ENCODE measurements at regions of chr22 and their contacts with region 1.

Region 1: DNA sequence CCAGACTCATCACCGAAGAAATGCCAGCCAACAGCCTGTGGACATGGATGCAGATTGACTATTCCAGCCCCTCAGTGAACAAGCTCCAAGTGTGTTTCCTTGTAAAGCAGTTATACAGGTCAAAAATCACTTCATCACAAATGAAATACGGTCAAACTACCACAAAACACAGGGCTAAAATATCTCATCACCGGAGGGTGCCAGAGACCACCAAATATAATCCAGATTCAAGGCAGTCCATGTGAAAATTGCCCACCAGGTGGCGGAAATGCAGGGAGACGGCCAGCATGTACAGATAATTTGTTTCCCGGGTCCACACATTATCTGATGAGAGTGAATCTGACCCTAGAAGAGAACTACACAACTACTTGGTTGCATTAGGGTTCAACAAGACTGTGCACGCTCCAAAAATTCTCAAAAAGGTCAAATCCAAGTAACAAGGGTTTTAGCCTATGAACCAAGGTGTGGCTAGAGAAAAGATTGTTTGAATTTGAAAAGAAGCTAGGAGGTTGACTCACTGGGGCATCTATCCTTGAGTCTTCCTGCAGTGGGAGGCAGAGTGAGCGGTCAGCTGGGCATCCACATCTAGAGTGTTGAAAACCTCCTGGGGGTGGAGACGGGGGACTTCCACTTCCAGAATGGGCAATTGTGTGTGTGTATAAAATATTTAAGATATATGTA is 71.7 kb downstream of the IGLL5 start:
- DNase-seq: peak in 1 of 3 donors; percentile 46
- H3K4me3 ChIP-seq: no peak overlapping the region
- H3K4me3 Mint-ChIP-seq: no peak overlapping the region
- H3K27ac ChIP-seq: no peak overlapping the region
- H3K27ac Mint-ChIP-seq: no peak overlapping the region
- H3K4me1 ChIP-seq: peaks cover 13 to 15% of the 10 kb centered on the region in 2 donors
- H3K4me1 Mint-ChIP-seq: peaks cover 13% of the 10 kb centered on the region
- H3K27me3 ChIP-seq: peaks cover 0 to 1% of the 10 kb centered on the region in 2 donors
- H3K27me3 Mint-ChIP-seq: peaks cover 11 to 22% (median 20%) of the 10 kb centered on the region in 3 donors
- CTCF ChIP-seq: peak; percentile 70

Region 2: DNA sequence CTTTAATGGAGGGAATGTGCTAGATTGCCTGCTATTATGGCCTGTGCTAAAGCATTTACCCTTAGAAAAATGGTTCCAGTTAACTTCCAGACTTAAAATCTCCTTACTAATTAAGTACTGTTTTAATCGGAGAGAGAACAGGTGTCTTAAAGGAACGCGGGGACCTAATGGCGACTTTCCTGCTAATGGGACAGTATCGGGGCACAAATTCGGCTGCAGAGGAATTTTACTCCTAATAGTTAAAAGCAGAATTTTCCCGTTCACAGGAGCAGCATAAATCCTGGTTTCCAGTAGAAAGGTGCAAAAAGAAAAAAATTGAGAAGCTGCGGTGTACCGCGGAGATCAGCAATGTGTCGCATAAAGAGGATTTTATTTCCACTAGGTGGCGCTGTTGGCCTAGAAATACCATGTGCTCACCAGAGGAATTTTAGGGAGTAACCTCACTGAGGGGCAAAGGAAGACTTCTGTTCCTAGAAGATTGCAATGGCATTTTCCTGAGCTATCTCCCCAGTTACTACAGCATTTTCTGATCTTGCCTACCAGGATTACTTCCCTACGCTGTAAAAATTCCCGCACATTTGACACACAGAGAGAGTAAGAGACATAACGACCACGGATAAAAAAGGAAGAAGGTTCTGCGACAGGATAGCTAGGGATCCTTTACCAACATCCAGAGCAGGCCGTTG is 495.3 kb before region 1 on chr22:
- intact Hi-C with region 1: loop called in 1 of 2 experiments (anchors 10 kb)
- DNase-seq: peak; percentile 39 to 64 (median 54)
- H3K4me3 ChIP-seq: no peak overlapping the region
- H3K4me3 Mint-ChIP-seq: peak overlapping the region in 1 of 2 donors; percentile 35
- H3K27ac ChIP-seq: no peak overlapping the region
- H3K27ac Mint-ChIP-seq: peak overlapping the region in 1 of 7 donors; percentile 51
- H3K4me1 ChIP-seq: no peaks in the 10 kb centered on the region
- H3K4me1 Mint-ChIP-seq: peaks cover 2% of the 10 kb centered on the region
- H3K27me3 ChIP-seq: peaks cover 3 to 9% of the 10 kb centered on the region in 2 donors
- H3K27me3 Mint-ChIP-seq: peaks cover 3 to 35% (median 10%) of the 10 kb centered on the region in 3 donors
- CTCF ChIP-seq: peak; percentile 88

Region 3: DNA sequence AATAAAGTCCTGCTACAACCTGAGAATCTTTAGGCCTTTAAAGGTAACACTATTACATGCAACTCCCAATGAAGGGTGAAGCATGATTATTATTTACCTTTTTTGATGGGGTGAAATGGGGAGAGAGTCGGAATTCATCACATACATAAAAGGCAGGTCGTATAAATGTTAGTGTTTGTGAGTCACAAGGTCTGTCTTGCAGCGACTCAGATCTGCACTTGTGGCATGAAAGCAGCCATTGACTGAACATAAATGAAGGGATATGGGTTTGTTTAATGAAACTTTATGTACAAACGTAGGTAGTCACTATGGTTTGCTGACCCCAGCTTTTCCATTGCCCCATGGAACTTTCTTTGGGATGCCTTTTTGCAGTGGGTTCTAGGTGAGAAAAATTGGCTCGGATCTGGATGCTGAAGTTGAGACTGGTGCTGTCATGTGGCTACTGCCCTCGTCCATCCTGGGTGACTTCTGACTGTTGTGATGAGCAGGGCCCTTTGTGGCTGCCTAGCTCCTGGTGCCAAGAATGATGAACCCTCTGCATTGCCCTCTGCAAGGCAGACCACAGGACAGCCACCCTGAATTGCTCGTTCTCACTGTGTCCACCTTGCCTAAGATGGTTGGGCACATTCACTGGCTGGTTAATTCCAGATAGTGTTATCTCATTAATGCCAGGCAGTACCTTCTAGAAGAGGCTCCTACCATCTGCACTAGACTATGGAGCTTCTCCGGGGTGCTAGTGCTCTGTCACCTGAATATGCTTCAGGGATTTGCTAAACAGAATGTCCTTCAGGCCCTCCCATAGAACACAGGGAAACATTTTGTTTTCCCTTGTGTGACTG is 303.6 kb before region 1 on chr22:
- intact Hi-C with region 1: no loop called
- DNase-seq: no peak
- H3K4me3 ChIP-seq: no peak overlapping the region
- H3K4me3 Mint-ChIP-seq: no peak overlapping the region
- H3K27ac ChIP-seq: no peak overlapping the region
- H3K27ac Mint-ChIP-seq: no peak overlapping the region
- H3K4me1 ChIP-seq: no peaks in the 10 kb centered on the region
- H3K4me1 Mint-ChIP-seq: peaks cover 2% of the 10 kb centered on the region
- H3K27me3 ChIP-seq: no peaks in the 10 kb centered on the region
- H3K27me3 Mint-ChIP-seq: peaks cover 3 to 7% (median 7%) of the 10 kb centered on the region in 3 donors
- CTCF ChIP-seq: no peak

Region 4: DNA sequence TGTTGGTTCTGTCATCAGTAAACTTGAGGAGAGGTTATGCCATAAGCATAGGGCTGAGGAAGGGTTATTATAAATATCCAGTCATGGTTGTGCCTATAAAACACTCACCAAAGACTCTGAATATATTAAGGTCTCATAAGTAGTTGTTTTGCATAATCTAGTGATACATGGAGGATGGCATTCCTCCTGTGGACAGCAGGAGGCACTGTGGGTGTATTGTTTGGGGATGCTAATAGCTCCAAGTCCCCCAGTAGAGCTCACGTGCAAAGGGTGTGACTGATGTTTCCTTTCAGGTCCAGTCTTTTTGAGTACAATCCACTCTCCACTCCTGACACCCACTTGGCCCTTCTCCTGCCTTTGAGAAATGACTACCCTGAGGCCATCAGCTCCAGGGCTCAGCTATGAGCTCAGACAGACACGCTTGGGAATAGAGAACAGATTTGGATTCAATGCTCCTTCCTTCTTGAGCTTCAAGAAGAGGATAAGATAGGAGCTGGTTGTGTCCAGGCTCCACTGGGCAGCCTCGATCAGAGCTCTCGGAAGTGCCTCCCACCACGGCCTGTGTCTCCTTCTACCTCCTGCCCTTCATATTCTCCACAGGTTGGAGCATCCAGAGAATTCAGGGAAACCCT is 156.8 kb before region 1 on chr22:
- intact Hi-C with region 1: loop called in 1 of 2 experiments (anchors 5 kb)
- DNase-seq: peak in 2 of 3 donors; percentile 33 to 38
- H3K4me3 ChIP-seq: no peak overlapping the region
- H3K4me3 Mint-ChIP-seq: no peak overlapping the region
- H3K27ac ChIP-seq: no peak overlapping the region
- H3K27ac Mint-ChIP-seq: no peak overlapping the region
- H3K4me1 ChIP-seq: no peaks in the 10 kb centered on the region
- H3K4me1 Mint-ChIP-seq: no peaks in the 10 kb centered on the region
- H3K27me3 ChIP-seq: no peaks in the 10 kb centered on the region
- H3K27me3 Mint-ChIP-seq: peaks cover 0 to 2% (median 0%) of the 10 kb centered on the region in 3 donors
- CTCF ChIP-seq: peak; percentile 71

Region 5: GRCh38 chr22:22848364-22848866 is 110.9 kb before region 1 on chr22:
- intact Hi-C with region 1: loop called (anchors 2 kb)
- DNase-seq: peak; percentile 50 to 68 (median 63)
- H3K4me3 ChIP-seq: no peak overlapping the region
- H3K4me3 Mint-ChIP-seq: no peak overlapping the region
- H3K27ac ChIP-seq: no peak overlapping the region
- H3K27ac Mint-ChIP-seq: no peak overlapping the region
- H3K4me1 ChIP-seq: no peaks in the 10 kb centered on the region
- H3K4me1 Mint-ChIP-seq: peaks cover 9% of the 10 kb centered on the region
- H3K27me3 ChIP-seq: no peaks in the 10 kb centered on the region
- H3K27me3 Mint-ChIP-seq: peaks cover 0 to 4% (median 2%) of the 10 kb centered on the region in 3 donors
- CTCF ChIP-seq: peak; percentile 98

Region 6: GRCh38 chr22:23281406-23282088 is 322.3 kb after region 1 on chr22:
- intact Hi-C with region 1: loop called in 1 of 2 experiments (anchors 10 kb)
- DNase-seq: peak; percentile 62 to 71 (median 65)
- H3K4me3 ChIP-seq: no peak overlapping the region
- H3K4me3 Mint-ChIP-seq: no peak overlapping the region
- H3K27ac ChIP-seq: no peak overlapping the region
- H3K27ac Mint-ChIP-seq: no peak overlapping the region
- H3K4me1 ChIP-seq: peaks cover 3 to 9% of the 10 kb centered on the region in 2 donors
- H3K4me1 Mint-ChIP-seq: peaks cover 8% of the 10 kb centered on the region
- H3K27me3 ChIP-seq: no peaks in the 10 kb centered on the region
- H3K27me3 Mint-ChIP-seq: no peaks in the 10 kb centered on the region
- CTCF ChIP-seq: peak; percentile 93

Measured in CD14-positive monocyte (primary cell).